ENCODE measurements at regions of chr1 and their contacts with region 1.

Region 1: GRCh38 chr1:83086346-83086745 is 912.6 kb downstream of the TTLL7 start:
- DNase-seq: peak; percentile 21 to 91
- H3K4me3 ChIP-seq: no peak overlapping the region
- H3K27ac ChIP-seq: peak overlapping the region; percentile 66
- H3K4me1 ChIP-seq: peaks cover 29% of the 10 kb centered on the region
- H3K27me3 ChIP-seq: no peaks in the 10 kb centered on the region
- CTCF ChIP-seq: no peak

Region 2: DNA sequence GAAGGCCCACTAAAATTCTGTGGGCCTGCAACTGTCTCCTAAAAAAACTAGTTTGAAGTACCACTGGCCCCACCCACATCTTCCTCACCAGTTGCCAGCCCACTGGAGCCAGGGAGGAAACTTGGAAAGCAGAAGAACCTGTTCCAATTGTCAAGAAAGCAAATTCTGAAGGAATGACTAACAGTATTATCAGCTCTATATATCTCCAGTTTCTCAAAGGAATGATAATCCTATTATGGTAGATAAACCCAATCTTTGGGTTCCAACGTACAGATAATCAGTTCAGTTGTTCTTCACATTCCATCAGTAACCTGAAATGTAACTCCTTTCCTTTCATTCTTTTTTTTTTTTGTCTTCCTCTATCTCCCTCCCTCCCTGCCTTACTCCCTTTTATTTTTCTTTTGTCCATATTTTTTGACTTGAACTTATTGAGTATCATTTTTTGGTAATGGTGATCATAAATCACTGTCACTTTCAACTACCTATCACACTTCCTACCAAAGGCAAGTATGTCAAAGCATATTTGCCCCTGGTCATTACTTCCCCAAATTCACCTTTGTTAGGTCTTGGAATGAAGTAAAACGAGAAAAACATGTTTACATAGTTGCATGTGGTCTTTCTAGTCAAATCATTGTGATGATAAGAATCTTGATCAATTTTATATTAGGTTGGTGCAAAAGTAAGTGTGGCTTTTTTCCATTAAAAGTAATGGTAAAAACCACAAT is 30.8 kb before region 1 on chr1:
- CTCF ChIA-PET with region 1: no interaction called
- POLR2A ChIA-PET with region 1: no interaction called
- intact Hi-C with region 1: loop called (anchors 1 kb)
- DNase-seq: peak; percentile 67 to 99
- H3K4me3 ChIP-seq: peak overlapping the region; percentile 10; the same call in 1 of the 2 replicates
- H3K27ac ChIP-seq: peak overlapping the region; percentile 82
- H3K4me1 ChIP-seq: peaks cover 56% of the 10 kb centered on the region
- H3K27me3 ChIP-seq: no peaks in the 10 kb centered on the region
- CTCF ChIP-seq: no peak

Region 3: DNA sequence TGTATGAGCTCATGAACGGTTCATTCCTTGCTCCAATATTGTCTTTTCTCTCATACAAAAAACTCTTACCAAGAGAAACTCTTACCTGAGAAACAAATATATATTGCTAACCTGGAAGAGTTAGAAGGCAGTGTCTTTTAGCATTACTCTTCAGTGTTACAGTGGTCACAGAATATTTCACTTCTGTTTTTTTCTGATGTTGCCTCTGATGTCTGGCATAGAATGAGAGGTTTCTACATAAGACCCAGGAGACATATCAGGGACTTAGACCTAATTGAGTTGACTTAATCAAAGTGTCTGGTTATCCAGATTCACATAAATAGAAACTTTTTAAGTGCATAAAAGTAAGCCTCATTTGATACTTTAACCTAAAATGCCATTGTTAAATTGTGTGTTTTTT is 11.2 kb before region 1 on chr1:
- CTCF ChIA-PET with region 1: no interaction called
- POLR2A ChIA-PET with region 1: no interaction called
- intact Hi-C with region 1: no loop called
- DNase-seq: no peak
- H3K4me3 ChIP-seq: no peak overlapping the region
- H3K27ac ChIP-seq: no peak overlapping the region
- H3K4me1 ChIP-seq: no peaks in the 10 kb centered on the region
- H3K27me3 ChIP-seq: no peaks in the 10 kb centered on the region
- CTCF ChIP-seq: no peak

Measured in PC-9 (cell line).